Astrocyte of the cerebellum (primary cell): ENCODE measurements at regions of chr5 and their contacts with region 1.

Region 1: DNA sequence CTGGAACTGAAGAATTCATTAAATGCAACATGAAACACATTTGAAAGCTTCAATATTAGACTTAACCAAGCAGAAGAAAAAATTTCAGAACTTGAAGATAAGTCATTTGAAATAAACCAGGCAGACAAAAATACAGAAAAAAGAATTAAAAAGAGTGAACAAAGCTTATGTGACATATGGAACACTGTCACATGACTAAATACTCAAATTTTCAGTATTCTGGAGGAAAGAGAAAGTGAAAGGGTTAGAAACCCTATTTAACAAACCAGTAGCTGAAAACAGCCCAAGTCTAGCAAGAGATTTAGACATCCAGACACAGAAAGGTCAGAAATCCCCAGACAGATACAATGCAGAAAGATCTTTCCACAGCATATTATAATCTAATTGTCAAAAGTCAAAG is 37.1 kb upstream of the SH3TC2 start:
- DNase-seq: no peak
- H3K4me3 ChIP-seq: no peak overlapping the region
- CTCF ChIP-seq: no peak

Region 2: DNA sequence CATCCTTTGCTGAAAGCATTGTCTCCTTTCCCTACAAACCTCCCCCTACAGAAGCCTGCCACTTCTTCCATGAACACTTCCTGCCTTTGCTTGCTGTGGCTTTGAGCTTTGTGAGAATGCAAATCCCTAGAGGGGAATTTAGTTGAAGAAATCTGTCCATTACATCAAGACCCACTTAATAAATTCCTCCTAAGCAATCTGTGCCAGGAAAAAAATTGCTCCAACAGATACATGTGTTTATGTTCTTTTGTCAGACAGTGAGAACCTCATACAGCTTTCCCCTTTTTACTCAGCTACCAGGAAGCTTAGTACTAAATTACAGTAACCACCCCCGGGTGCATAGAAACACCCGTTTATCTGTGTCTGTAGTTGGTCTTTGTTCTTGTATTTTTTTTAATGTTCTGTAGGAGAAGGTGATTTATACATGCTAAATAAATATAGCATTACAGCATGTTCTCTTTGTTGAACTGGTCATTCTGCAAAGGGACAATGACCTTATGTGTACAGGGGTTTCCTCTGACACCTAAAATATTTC is 80.9 kb before region 1 on chr5:
- in situ Hi-C with region 1: loop called (anchors 5 kb)
- DNase-seq: no peak
- H3K4me3 ChIP-seq: no peak overlapping the region
- CTCF ChIP-seq: no peak

Region 3: DNA sequence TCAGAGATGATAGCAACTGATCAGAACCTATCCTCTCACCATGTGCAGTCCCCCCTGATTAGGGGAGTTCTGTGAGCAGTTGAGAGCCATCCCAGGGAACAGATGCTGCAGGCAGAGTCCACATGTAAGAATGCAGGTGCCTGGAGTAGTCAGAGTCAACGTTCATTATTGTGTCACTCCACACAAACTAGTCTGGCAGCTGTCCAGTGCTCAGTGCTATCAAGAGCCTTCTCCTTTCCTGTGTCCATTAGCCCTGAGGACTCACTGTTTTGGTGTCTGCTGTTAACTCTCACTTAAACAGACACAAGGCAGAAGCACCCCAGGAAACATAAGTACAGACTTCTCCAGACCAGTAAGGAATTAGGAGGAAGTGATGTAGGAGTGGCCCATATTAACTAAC is 39.6 kb before region 1 on chr5:
- in situ Hi-C with region 1: no loop called
- DNase-seq: no peak
- H3K4me3 ChIP-seq: no peak overlapping the region
- CTCF ChIP-seq: no peak